Ascending aorta (tissue), 2 donors: ENCODE measurements at regions of chr7 and their contacts with region 1.

Region 1: DNA sequence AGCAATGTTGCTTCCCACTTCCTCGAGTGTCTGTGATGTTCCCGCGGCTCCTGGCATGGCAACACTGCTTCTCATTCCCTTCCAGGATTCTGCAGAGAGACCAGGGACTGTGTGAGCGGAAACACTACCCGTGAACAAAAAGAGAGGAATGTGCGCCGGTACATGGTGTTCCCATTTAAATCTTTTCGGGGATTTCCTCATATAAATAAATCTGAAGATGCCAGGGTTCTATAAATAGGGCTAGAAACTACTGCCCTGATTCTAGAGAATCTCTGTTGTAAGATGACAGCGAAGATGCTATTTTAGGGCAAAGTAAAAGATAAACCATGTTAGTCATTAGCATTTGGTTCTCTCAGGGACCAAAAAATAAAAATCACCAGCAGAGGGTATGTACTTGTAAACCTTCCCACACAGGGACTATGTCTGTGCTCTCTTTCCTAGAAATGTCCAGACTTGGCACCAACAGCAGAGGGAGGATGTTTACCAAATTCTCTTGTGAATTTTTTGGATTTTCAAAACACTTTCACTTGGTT is 92.2 kb upstream of the DDC start:
- DNase-seq: peak; percentile 63 to 93
- H3K4me3 ChIP-seq: peak overlapping the region in 1 of 2 donors; percentile 17
- H3K27ac ChIP-seq: peak overlapping the region; percentile 88 to 90
- H3K4me1 ChIP-seq: peaks cover 12 to 72% of the 10 kb centered on the region in 2 donors
- H3K27me3 ChIP-seq: no peaks in the 10 kb centered on the region
- CTCF ChIP-seq: peak in 2 of 3 experiments; percentile 19 to 28

Region 2: GRCh38 chr7:50620433-50620832 is 37.0 kb before region 1 on chr7:
- intact Hi-C with region 1: loop called (anchors 2 kb)
- DNase-seq: peak in 1 of 2 donors; percentile 75
- H3K4me3 ChIP-seq: peak overlapping the region in 1 of 2 donors; percentile 21
- H3K27ac ChIP-seq: peak overlapping the region; percentile 22 to 78
- H3K4me1 ChIP-seq: peaks cover 8 to 28% of the 10 kb centered on the region in 2 donors
- H3K27me3 ChIP-seq: no peaks in the 10 kb centered on the region
- CTCF ChIP-seq: no peak

Region 3: DNA sequence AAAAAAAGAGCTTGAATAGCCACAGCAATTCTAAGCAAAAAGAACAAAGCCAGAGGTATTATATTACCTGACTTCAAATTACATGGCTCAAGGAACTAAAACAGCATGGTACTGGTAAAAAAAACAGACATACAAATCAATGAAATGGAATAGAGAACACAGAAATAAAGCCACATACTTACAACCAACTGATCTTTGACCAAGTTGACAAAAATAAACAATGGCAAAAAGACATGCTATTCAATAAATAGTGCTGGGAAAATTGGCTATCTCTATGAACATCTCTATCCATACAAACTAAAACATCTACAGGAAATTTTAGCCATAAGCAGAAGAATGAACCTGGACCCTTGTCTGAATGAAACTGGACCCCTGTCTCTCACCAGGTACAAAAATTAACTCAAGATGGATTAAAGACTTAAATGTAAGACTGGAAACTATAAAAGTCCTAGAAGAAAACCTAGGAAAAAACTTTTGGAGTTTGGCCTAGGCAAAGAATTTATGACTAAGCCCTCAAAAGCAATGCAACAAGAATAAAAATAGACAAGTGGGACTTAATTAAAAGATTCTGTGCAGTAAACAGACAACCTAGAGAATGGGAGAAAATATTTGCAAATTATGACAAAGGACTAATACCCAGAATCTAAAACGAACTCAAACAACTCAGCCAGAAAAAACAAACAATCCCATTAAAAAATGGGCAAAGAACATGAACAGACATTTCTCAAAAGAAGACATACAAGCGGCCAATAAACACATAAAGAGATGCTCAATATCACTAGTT is 19.5 kb before region 1 on chr7:
- intact Hi-C with region 1: loop called (anchors 2 kb)
- DNase-seq: no peak
- H3K4me3 ChIP-seq: no peak overlapping the region
- H3K27ac ChIP-seq: peak overlapping the region in 1 of 2 donors; percentile 53
- H3K4me1 ChIP-seq: no peaks in the 10 kb centered on the region
- H3K27me3 ChIP-seq: no peaks in the 10 kb centered on the region
- CTCF ChIP-seq: no peak

Region 4: DNA sequence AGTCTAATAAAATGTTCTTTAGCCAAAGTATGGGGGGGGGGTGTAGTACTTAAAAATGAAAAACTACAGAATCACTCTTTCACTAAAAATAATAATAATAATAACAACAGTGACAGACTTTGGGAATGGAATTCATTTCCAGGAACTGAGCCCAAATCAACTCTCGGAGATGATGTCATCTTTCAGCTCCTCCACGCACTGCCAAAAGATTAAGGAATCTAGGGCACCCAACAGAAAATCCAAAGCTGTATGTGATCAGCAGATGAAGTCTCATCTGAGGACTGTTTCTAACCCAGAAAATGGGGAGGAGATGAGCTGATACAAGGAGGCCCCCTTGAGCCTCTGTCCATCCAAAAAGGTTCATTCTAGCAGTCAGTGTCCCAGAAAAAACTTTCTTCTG is 70.8 kb after region 1 on chr7:
- intact Hi-C with region 1: loop called (anchors 1 kb)
- DNase-seq: no peak
- H3K4me3 ChIP-seq: no peak overlapping the region
- H3K27ac ChIP-seq: peak overlapping the region; percentile 47 to 67
- H3K4me1 ChIP-seq: peaks cover 10 to 51% of the 10 kb centered on the region in 2 donors
- H3K27me3 ChIP-seq: no peaks in the 10 kb centered on the region
- CTCF ChIP-seq: no peak

Region 5: GRCh38 chr7:50793115-50793946 is 135.9 kb after region 1 on chr7:
- intact Hi-C with region 1: loop called (anchors 5 kb)
- DNase-seq: peak in 1 of 2 donors; percentile 80
- H3K4me3 ChIP-seq: peak overlapping the region; percentile 63 to 87
- H3K27ac ChIP-seq: peak overlapping the region; percentile 77 to 82
- H3K4me1 ChIP-seq: peaks cover 5 to 21% of the 10 kb centered on the region in 2 donors
- H3K27me3 ChIP-seq: no peaks in the 10 kb centered on the region
- CTCF ChIP-seq: no peak

Region 6: GRCh38 chr7:50953820-50954219 is 296.4 kb after region 1 on chr7:
- intact Hi-C with region 1: no loop called
- DNase-seq: no peak
- H3K4me3 ChIP-seq: no peak overlapping the region
- H3K27ac ChIP-seq: no peak overlapping the region
- H3K4me1 ChIP-seq: peaks cover 6 to 10% of the 10 kb centered on the region in 2 donors
- H3K27me3 ChIP-seq: no peaks in the 10 kb centered on the region
- CTCF ChIP-seq: no peak